Cardiac septum (tissue), 1 donor: ENCODE measurements at regions of chr6 and their contacts with region 1.

Region 1: DNA sequence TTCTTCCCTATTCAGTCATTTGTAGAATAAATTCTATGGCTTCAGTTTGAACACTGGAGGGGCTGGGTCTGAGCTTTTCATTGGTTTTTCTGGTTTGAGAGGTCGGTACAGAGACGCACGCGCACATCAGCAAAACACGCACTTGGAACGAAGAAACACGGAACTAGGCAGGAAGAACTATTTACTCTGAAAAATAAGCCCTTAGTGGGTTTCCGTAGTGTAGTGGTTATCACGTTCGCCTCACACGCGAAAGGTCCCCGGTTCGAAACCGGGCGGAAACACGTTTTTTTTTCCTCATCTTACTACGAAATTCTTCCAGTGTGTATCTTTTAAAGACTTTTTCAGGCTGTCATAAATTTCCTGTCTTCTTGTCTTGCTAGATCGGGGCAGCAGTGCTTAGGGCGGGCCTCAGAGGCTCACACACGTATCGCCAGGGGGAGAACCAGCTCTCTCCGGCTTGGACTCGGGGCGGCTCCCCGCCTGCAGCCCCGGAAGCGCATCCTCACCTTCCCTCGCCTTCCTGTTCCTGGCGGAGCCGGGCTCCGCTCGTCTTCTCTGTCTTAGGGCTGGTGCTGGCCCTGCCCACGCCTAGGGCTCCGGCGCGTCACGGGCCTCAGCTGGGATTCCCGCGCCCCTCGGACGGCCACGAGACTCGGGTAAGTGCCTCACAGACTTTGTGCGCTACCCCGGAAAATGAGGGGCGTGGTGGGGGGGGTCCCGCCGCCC is at the start of gene HMGN4:
- DNase-seq: peak; percentile 92
- total RNA-seq, gene HMGN4: 34.7 TPM

Region 2: DNA sequence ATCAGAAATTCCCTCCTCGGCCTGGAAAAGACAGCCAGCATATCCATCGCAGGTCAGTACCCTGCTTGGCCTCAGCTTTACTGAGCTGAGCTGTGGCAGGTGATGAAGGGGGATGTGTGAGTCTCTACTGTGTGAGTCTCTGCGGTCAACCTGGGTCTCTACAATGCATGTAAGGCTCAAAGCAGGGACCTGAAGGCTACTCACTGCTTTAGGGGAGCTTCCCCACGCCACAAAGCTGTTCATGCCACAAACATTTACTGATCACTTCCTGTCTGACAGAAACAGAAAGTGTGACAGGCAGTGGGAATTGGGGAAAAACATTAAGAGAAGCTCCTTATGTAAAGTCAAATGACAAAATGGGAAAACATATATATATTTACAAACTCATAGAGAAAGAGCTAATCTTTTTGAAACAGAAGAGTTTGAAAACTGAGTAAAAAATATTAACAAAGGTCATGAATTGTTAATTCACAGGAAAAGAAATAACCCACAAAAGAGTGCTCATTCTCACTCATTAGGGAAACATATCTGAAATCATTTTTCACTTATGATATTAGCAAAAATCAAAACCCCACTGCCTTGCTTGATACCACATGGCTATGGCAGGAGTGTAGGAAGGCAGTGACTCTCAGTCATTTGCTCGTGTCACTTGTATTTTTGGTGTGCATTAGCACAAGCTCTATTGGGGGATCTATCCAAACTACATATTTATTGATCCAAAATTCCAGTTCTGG is 91.9 kb before region 1 on chr6:
- intact Hi-C with region 1: no loop called
- DNase-seq: no peak

Region 3: DNA sequence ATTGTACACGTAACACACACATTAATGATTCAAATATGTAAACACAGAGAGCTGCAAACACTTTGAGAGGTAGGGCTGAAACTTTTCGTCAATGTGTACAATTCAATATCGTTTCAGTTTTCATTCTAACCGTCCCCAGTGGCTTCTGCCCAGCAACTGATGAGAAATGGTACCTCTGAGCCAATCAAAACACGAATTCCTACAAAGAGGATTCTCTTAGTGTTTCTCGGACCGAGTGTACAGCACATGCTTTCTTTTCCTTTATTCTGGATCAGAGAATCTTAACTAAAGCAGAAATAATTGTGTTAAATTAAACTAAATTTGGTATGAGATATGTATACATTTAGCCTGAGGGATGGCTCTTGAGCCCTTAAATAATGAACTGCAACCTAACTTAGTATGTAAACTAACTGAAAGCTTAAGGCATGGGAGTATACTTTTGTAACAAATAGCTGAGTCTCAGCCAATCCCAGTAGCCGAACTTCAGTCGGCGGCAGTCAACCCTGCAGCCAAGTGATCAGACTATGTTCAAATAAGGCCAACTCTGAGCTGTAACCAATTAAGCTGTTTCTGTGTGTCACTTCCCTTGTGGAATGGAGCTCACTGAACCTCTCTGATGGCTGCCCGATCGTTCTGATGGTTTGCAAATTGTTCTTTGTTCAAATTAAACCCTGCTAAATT is 64.1 kb before region 1 on chr6:
- intact Hi-C with region 1: loop called (anchors 5 kb)
- DNase-seq: peak; percentile 89

Region 4: DNA sequence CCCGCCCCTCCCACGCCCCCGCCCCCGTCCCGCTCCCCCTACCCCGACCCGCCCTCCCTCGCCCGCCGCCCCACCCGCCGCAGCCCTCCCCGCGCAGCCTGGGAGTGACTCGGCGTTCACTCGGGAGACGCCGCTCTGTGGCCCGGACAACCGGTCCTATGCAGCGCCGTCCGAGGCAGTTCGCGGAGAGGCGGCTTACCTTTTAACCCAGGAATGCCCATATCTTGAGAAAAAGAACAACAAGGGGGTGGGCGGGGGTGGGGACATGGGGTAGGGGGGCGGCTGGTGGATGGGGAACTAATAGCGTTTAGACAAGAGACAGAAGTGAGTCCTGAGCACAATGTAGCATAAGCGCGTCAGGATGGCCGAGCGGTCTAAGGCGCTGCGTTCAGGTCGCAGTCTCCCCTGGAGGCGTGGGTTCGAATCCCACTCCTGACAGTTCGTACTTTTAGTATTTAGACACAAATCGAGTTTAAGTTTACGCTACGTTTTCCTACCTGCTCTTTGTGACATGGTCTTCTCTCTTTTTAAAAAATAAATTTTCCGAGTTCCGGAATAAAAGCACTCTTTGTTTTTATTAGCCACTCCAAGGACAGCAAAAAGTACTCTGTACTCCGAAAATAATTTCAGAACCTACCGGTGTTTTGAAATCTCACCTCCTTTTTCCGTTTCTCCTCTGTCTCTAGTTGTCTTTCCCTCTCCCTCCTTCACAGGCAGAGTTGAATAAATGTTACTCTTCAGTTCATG is 17.0 kb before region 1 on chr6:
- intact Hi-C with region 1: loop called (anchors 1 kb)
- DNase-seq: peak; percentile 94

Region 5: GRCh38 chr6:26553635-26554446 is 15.8 kb after region 1 on chr6:
- intact Hi-C with region 1: loop called (anchors 1 kb)
- DNase-seq: no peak

Region 6: GRCh38 chr6:26568601-26569432 is 30.8 kb after region 1 on chr6:
- intact Hi-C with region 1: loop called (anchors 2 kb)
- DNase-seq: peak; percentile 93

Region 7: DNA sequence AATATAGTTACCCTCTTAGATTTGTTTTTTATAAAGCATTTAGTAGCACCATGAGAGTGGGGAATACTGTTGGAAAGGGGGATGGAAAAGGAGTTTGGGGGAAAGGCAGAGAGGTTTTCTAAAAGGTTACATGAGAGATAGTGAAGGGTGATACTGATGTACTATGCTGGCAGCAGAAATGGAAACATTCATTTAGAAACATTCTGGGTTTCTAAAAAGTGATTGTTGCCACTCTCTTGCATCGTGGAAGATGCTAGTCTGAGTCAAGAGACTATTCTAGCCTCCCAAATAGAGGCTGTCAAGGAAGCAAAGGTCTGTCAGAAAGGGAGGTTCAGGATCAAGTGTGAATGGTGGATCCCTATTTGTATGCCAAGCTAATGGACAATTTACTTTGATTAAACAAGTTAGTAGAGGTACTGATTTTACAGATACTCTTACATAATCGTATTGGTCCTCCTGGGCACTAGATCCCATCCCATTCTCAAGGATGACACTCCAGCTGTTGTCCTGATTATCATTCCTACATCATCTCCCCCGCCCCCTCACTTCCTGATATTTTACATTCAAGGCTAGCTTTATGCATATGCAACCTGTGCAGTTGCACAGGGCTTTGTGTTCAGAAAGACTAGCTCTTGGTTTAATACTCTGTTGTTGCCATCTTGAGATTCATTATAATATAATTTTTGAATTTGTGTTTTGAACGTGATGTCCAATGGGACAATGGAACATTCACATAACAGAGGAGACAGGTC is 43.3 kb after region 1 on chr6:
- intact Hi-C with region 1: no loop called
- DNase-seq: no peak